Heart right ventricle (tissue), 16 donors: ENCODE measurements at regions of chr4 and their contacts with region 1.

Region 1: DNA sequence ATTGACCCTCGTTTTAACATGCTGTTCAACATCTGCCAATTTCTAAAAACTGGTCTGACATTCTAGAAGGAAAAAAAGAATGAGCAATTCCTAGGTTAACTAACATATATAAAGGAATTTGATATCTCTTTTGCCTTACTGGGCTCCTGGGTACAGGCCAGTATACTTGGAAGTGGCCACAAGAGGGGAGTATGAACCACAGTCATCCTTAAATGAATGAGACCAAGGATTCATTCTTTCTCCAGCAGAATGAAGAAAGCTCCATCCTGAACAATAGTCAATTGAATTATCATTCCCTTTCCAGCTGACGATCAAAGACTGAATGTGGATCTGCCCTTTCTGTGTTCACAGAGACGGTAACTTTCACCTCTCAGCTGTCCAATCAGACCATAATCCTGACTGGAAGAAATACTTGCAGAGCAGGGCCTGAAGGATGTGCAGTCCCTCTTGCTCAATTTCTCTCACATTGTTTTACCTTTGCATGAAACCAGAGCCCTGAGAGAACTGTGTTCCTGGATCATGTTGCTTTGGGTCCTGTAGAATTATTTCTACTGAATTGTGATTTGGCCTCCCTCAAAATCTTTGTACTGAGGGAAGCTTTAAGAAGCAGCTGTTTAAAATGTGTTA is 14.8 kb upstream of the SPARCL1 start:
- DNase-seq: peak in 1 of 2 donors; percentile 48
- ATAC-seq: peak in 7 of 8 donors; percentile 46 to 77 (median 65)
- H3K4me3 ChIP-seq: no peak overlapping the region
- H3K27ac ChIP-seq: peak overlapping the region in 3 of 10 donors; percentile 15 to 77 (median 20)
- H3K4me1 ChIP-seq: peaks cover 0 to 32% (median 5%) of the 10 kb centered on the region in 9 donors
- H3K27me3 ChIP-seq: no peaks in the 10 kb centered on the region
- CTCF ChIP-seq: peak in 8 of 9 donors; percentile 44 to 83 (median 65)

Region 2: GRCh38 chr4:87574996-87575395 is 31.0 kb after region 1 on chr4:
- intact Hi-C with region 1: no loop called
- DNase-seq: no peak
- ATAC-seq: no peak
- H3K4me3 ChIP-seq: no peak overlapping the region
- H3K27ac ChIP-seq: no peak overlapping the region
- H3K4me1 ChIP-seq: no peaks in the 10 kb centered on the region
- H3K27me3 ChIP-seq: no peaks in the 10 kb centered on the region
- CTCF ChIP-seq: no peak

Region 3: DNA sequence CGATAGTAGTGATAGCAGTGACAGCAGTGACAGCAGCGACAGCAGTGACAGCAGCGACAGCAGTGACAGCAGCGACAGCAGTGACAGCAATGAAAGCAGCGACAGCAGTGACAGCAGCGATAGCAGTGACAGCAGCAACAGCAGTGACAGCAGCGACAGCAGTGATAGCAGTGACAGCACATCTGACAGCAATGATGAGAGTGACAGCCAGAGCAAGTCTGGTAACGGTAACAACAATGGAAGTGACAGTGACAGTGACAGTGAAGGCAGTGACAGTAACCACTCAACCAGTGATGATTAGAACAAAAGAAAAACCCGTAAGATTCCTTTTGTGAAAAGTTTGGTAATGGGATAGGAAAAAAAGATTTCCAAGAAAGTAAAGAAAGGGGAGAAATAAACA is 72.3 kb after region 1 on chr4:
- intact Hi-C with region 1: loop called in 1 of 10 experiments (anchors 10 kb)
- DNase-seq: no peak
- ATAC-seq: no peak
- H3K4me3 ChIP-seq: no peak overlapping the region
- H3K27ac ChIP-seq: no peak overlapping the region
- H3K4me1 ChIP-seq: peaks cover 0 to 9% (median 0%) of the 10 kb centered on the region in 9 donors
- H3K27me3 ChIP-seq: peaks cover 0 to 4% (median 0%) of the 10 kb centered on the region in 7 donors
- CTCF ChIP-seq: no peak

Region 4: GRCh38 chr4:87662871-87663270 is 118.9 kb after region 1 on chr4:
- intact Hi-C with region 1: loop called in 1 of 10 experiments (anchors 5 kb)
- DNase-seq: peak in 1 of 2 donors; percentile 22
- ATAC-seq: peak in 3 of 8 donors; percentile 15 to 54 (median 49)
- H3K4me3 ChIP-seq: no peak overlapping the region
- H3K27ac ChIP-seq: no peak overlapping the region
- H3K4me1 ChIP-seq: peaks cover 0 to 13% (median 0%) of the 10 kb centered on the region in 9 donors
- H3K27me3 ChIP-seq: no peaks in the 10 kb centered on the region
- CTCF ChIP-seq: no peak

Region 5: DNA sequence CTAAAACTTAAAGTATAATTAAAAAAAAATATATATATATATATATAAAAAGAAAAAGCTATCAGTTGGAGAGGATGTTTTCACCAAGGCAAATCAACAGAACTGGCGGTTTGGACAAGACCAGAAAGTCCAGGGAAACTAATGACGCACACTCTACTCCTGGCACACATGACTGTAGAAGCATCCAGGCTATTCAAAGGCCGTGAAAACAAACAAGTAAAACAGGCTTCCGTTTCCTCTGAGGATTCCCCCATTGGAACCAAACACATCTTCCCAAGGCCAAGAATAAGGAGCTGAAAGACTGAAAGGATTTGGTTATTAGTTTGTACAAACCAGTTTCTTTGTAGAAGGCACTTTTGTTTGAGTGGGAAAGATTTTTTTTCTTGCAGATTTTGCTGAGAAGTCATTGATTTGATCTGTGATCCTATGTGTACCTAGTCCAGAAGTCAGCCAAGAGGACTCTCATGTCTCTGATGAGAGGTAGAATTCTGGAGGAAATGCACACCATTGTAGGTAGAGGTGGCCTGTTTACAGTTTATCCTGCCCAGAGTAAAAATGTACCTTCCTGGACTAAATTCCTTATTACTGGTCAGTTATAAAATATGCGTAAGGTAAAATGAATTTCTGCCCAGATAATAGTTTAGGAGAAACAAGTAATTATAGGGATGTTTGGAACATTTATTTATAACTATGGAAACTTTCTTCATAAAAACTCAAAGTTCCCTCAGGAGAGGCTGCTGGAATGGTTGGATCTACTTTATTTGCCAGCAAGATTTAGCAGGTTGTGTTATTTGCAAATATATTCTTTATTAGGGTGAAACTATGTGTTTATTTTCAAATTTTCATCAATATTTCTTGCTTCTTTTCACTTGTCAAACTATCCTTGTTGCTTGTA is 172.7 kb after region 1 on chr4:
- intact Hi-C with region 1: loop called in 1 of 10 experiments (anchors 5 kb)
- DNase-seq: peak in 1 of 2 donors; percentile 84
- ATAC-seq: peak; percentile 81 to 94 (median 89)
- H3K4me3 ChIP-seq: no peak overlapping the region
- H3K27ac ChIP-seq: peak overlapping the region; percentile 57 to 89 (median 77)
- H3K4me1 ChIP-seq: peaks cover 0 to 29% (median 16%) of the 10 kb centered on the region in 9 donors
- H3K27me3 ChIP-seq: no peaks in the 10 kb centered on the region
- CTCF ChIP-seq: no peak